Activated B cell treated with CpG ODN at 0.5 μM for 24 hours (primary cell): ENCODE measurements at regions of chr14 and their contacts with region 1.

Region 1: GRCh38 chr14:75333606-75334548 is 55.2 kb downstream of the FOS start:
- DNase-seq: peak; percentile 32
- ATAC-seq: peak; percentile 80
- H3K4me3 Mint-ChIP-seq: peak overlapping the region; percentile 84
- H3K27ac Mint-ChIP-seq: peak overlapping the region; percentile 81
- H3K4me1 Mint-ChIP-seq: peaks cover 27% of the 10 kb centered on the region
- H3K27me3 Mint-ChIP-seq: peaks cover 4% of the 10 kb centered on the region
- CTCF ChIP-seq: no peak

Region 2: DNA sequence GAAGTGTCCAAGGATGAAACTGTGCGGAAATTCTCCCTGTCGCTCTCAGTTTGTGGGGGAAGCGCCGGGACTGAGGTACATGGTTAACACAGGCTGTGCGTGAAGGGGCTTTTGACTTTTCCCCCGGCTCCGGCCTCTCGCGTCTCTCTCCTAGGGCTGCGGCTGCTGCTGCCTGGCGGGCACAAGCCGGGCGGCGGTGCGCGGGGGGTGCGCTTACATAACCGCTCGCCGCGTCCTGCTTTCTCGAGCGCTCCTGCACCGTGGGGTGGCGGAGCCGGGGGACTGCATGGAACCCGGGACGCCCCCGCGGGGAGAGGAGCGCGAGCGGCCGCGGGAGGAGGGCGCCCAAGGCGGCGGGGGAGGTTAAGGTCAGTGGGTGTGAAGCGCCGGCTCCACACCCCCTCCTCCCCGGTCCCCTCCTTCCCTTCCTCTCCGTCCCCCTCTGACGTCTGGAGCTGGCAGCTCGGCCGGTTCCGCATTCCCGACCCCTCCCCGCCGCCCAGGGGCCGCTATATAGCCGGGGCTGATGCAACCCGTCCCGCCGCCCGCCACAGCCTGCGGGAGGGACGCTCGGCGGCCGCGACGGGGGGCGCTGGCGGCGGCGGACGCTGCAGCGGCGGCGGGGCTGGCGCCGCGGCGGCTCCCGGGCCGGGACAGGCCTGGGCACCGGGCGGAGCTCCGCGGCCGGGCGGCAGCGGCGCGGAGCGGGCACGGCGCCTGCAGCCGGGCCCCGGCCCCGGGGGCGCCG is 93.8 kb after region 1 on chr14 and contains the start of gene JDP2:
- CTCF ChIA-PET with region 1: no interaction called
- POLR2A ChIA-PET with region 1: interaction called, 7 read pairs
- intact Hi-C with region 1: loop called (anchors 2 kb)
- DNase-seq: peak; percentile 57
- ATAC-seq: peak; percentile 53
- H3K4me3 Mint-ChIP-seq: peak within 1 kb of the TSS; percentile 88
- H3K27ac Mint-ChIP-seq: peak within 1 kb of the TSS; percentile 96
- H3K4me1 Mint-ChIP-seq: peaks cover 37% of the 10 kb centered on the region
- H3K27me3 Mint-ChIP-seq: no peaks in the 10 kb centered on the region
- CTCF ChIP-seq: no peak
- total RNA-seq, gene JDP2: 21.2 and 21.8 TPM in 2 replicates